ENCODE measurements at regions of chr1 and their contacts with region 1.

Region 1: GRCh38 chr1:8910914-8911313 is 32.4 kb upstream of the ENO1 start:
- DNase-seq: no peak
- ATAC-seq: peak; percentile 36
- H3K4me3 Mint-ChIP-seq: no peak overlapping the region
- H3K27ac Mint-ChIP-seq: no peak overlapping the region
- H3K4me1 Mint-ChIP-seq: peaks cover 2% of the 10 kb centered on the region
- H3K27me3 Mint-ChIP-seq: no peaks in the 10 kb centered on the region

Region 2: GRCh38 chr1:8970870-8971337 is 60.0 kb after region 1 on chr1:
- CTCF ChIA-PET with region 1: no interaction called
- POLR2A ChIA-PET with region 1: no interaction called
- intact Hi-C with region 1: loop called in 1 of 2 experiments (anchors 5 kb)
- DNase-seq: peak; percentile 74
- ATAC-seq: peak; percentile 94
- H3K4me3 Mint-ChIP-seq: peak overlapping the region; percentile 72
- H3K27ac Mint-ChIP-seq: peak overlapping the region; percentile 84
- H3K4me1 Mint-ChIP-seq: peaks cover 39% of the 10 kb centered on the region
- H3K27me3 Mint-ChIP-seq: no peaks in the 10 kb centered on the region

Measured in activated CD4-positive, alpha-beta T cell treated with anti-CD3 and anti-CD28 coated beads for 36 hours (primary cell).